Body of pancreas (tissue), 4 donors: ENCODE measurements at regions of chr7 and their contacts with region 1.

Region 1: GRCh38 chr7:44587843-44588711 is 6.0 kb upstream of the TMED4 start:
- DNase-seq: peak; percentile 46 to 71 (median 70)
- ATAC-seq: peak; percentile 86
- H3K4me3 ChIP-seq: no peak overlapping the region
- H3K27ac ChIP-seq: no peak overlapping the region
- H3K4me1 ChIP-seq: peaks cover 4% of the 10 kb centered on the region
- H3K27me3 ChIP-seq: no peaks in the 10 kb centered on the region
- CTCF ChIP-seq: peak; percentile 43 to 82 (median 72)
- POLR2A ChIP-seq: no peak

Region 2: DNA sequence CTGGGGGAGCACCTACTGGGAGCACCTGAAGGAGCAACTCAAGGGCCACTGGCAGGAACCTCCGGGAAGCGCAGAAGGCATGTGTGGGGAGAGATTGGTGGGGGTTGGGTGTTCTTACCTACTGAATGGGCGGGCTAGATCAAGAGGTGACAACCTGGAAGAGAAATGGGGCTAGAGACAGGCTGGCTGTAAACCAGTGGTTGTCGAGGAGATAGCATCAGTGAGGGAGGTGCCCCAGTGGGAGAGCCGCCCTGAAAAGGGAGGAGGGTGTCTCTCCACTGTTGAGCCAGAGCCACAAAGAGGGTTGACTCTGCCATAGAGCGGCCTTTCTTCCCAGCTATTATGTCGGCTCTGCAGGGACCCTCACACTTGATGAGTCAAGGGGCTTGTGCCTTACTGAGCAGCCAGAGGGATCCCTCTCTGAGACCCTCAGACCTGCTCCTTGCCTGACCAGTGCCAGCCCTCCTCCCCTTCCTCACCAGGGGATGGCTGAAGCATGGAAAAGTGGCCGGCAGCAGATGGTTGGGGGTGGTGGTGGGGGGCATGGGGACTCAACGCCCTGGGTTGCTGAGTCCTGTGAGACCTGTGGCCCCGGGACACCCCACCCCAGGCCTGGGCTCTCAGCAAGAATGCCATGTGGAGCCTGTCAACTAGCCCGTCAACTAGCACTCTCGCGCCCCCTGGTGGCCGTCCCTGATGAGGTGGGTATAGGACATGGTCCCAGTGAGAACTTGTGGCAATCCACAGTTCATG is 333.7 kb after region 1 on chr7:
- intact Hi-C with region 1: loop called (anchors 5 kb)
- DNase-seq: peak; percentile 90 to 95 (median 91)
- ATAC-seq: peak; percentile 97
- H3K4me3 ChIP-seq: no peak overlapping the region
- H3K27ac ChIP-seq: no peak overlapping the region
- H3K4me1 ChIP-seq: peaks cover 5% of the 10 kb centered on the region
- H3K27me3 ChIP-seq: no peaks in the 10 kb centered on the region
- CTCF ChIP-seq: peak; percentile 76 to 88 (median 82)
- POLR2A ChIP-seq: no peak